Endothelial cell of umbilical vein (primary cell): ENCODE measurements at regions of chr20 and their contacts with region 1.

Region 1: DNA sequence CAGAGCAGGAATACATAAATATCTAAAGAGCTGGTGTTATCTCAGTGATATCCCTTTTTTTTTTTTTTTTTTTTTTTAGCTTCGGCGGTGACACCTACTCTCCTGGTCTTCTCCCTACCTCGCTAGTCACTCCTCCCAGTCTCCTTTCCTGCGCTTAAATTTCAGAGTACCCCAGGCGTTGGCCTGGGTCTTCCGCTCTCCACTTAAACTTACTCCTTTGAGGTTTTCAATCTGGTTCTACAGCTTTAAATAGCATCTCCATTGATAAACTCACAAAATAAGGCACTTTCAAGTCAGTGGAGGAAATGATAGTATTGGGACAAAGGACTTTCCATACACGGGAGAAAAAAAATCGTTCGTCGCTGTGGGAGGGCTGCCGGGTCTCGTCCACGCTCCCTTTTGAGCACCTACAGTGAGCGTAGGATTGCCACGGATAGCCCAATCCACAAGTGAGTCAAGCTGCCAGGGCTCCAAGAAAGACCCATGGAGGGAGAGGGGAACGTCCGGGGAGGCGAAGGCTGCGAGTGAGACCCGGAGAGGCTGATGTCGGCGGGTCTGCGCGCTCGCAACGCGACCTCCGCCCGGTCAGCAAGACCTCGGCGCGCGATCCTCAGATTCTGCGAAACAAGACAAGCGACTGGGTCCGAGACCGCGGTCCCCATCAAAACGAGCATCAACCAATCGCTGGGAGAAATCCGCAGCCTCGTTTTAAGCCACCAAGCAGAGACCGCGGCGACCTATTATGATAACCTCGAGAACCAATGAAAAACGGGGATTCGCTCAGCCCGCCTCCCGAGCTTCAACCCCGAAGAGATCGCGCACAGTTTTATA is 672 bp upstream of the SRSF6 start:
- DNase-seq: peak; percentile 92
- H3K4me3 ChIP-seq: peak overlapping the region; percentile 74 to 99 (median 90)
- H3K27ac ChIP-seq: peak overlapping the region; percentile 96
- H3K4me1 ChIP-seq: peaks cover 16% of the 10 kb centered on the region
- H3K27me3 ChIP-seq: peaks cover 5 to 6% of the 10 kb centered on the region in 2 experiments
- CTCF ChIP-seq: no peak
- POLR2A ChIP-seq: no peak

Region 2: GRCh38 chr20:42652266-42652665 is 804.8 kb before region 1 on chr20:
- CTCF ChIA-PET with region 1: no interaction called
- POLR2A ChIA-PET with region 1: no interaction called
- dilution Hi-C with region 1: no loop called
- intact Hi-C with region 1: no loop called
- DNase-seq: no peak
- H3K4me3 ChIP-seq: no peak overlapping the region
- H3K27ac ChIP-seq: no peak overlapping the region
- H3K4me1 ChIP-seq: no peaks in the 10 kb centered on the region
- H3K27me3 ChIP-seq: no peaks in the 10 kb centered on the region
- CTCF ChIP-seq: no peak
- POLR2A ChIP-seq: no peak

Region 3: DNA sequence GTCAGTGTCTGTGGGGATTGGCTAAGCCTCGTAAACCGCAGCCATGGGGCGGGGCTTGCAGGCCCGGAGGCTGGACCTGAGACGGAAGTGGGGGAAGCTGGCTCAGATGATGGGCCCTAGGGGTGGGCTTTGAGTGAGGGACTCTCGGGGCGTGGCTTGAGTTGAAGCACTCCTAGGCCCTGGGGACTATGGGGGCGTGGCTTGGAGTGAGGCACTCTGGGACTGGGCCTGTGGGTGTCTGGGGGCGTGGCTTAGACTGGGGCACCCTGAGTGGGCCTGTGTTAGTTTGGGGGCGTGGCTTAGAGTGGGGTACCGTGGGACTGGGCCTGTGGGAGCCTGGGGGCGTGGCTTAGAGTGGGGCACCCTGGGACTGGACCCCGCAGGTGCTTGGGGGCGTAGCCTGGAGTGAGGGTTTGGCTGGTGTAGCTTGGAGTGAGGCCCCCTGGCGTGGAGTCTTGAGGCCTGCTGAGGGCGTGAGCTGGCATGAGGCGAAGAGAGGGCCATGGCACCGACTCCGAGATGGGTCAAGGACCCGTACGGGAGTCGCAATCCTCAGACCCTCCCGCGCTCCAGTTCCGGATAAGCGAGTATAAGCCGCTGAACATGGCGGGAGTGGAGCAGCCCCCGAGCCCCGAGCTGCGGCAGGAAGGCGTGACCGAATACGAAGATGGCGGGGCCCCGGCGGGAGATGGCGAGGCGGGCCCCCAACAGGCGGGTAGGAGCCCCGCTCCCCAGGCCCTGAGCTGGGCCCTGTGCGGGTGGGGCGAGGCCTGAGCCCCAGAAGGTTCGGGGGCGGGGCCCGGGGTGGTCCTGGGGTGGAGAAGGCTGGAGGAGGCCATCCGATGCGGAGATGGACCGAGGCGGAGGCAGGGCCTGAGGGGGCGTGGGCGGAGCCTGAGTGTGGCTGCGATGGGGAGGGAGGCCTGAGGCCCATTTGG is 57.3 kb after region 1 on chr20:
- CTCF ChIA-PET with region 1: no interaction called
- POLR2A ChIA-PET with region 1: interaction called, 9 read pairs
- dilution Hi-C with region 1: no loop called
- intact Hi-C with region 1: loop called (anchors 1 kb)
- DNase-seq: peak; percentile 98
- H3K4me3 ChIP-seq: peak overlapping the region; percentile 45 to 71 (median 46)
- H3K27ac ChIP-seq: peak overlapping the region; percentile 12
- H3K4me1 ChIP-seq: no peaks in the 10 kb centered on the region
- H3K27me3 ChIP-seq: no peaks in the 10 kb centered on the region
- CTCF ChIP-seq: peak; percentile 15 to 55
- POLR2A ChIP-seq: no peak

Region 4: GRCh38 chr20:43590392-43591323 is 133.6 kb after region 1 on chr20 and contains the start of gene IFT52:
- CTCF ChIA-PET with region 1: no interaction called
- POLR2A ChIA-PET with region 1: interaction called, 9 read pairs
- dilution Hi-C with region 1: no loop called
- intact Hi-C with region 1: loop called (anchors 5 kb)
- DNase-seq: peak; percentile 93
- H3K4me3 ChIP-seq: peak within 1 kb of the TSS; percentile 64 to 100 (median 80)
- H3K27ac ChIP-seq: peak within 1 kb of the TSS; percentile 91
- H3K4me1 ChIP-seq: peaks cover 9% of the 10 kb centered on the region
- H3K27me3 ChIP-seq: peaks cover 0 to 2% of the 10 kb centered on the region in 2 experiments
- CTCF ChIP-seq: no peak
- POLR2A ChIP-seq: peak; percentile 32
- total RNA-seq, gene IFT52: 29.7 and 30.0 TPM in 2 replicates

Region 5: DNA sequence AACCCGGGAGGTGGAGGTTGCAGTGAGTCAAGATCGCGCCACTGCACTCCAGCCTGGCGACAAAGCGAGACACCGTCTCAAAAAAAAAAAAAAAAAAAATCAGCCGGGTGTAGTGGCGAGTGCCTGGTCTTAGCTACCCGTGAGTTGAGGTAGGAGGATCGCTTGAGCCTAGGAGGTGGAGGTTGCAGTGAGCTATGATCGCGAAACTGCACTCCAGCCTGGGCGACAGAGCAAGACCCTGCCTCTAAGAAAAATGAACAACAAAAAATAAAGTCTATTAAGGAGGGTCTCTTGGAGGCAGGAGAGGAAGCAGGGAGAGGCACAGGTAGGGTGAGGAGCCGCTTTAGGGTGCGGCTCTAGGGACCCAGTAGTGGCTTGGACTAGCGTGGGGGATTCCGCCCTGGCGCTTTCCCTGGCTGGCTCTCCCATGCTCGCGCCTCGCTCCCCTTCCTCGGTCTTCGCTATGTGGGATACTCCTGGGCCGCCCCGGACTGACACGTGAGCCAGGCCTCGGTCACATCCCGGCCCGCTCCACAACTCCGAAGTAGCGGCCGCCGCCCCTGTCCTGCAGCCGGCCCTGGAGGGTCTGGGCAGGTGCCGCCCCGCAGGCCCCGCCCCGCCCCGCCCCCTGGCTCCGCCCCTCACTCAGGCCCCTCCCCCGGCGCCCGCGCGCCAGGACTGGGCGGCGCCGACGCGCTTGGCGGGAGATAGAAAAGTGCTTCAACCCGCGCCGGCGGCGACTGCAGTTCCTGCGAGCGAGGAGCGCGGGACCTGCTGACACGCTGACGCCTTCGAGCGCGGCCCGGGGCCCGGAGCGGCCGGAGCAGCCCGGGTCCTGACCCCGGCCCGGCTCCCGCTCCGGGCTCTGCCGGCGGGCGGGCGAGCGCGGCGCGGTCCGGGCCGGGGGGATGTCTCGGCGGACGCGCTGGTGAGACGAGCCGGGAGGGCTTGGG is 209.6 kb after region 1 on chr20 and contains the start of gene MYBL2:
- CTCF ChIA-PET with region 1: no interaction called
- POLR2A ChIA-PET with region 1: no interaction called
- dilution Hi-C with region 1: no loop called
- intact Hi-C with region 1: loop called (anchors 2 kb)
- DNase-seq: peak; percentile 48
- H3K4me3 ChIP-seq: peak within 1 kb of the TSS; percentile 35 to 47 (median 43)
- H3K27ac ChIP-seq: peak within 1 kb of the TSS; percentile 14
- H3K4me1 ChIP-seq: peaks cover 15% of the 10 kb centered on the region
- H3K27me3 ChIP-seq: peaks cover 0 to 7% of the 10 kb centered on the region in 2 experiments
- CTCF ChIP-seq: no peak
- POLR2A ChIP-seq: no peak
- total RNA-seq, gene MYBL2: 105 and 107 TPM in 2 replicates

Region 6: DNA sequence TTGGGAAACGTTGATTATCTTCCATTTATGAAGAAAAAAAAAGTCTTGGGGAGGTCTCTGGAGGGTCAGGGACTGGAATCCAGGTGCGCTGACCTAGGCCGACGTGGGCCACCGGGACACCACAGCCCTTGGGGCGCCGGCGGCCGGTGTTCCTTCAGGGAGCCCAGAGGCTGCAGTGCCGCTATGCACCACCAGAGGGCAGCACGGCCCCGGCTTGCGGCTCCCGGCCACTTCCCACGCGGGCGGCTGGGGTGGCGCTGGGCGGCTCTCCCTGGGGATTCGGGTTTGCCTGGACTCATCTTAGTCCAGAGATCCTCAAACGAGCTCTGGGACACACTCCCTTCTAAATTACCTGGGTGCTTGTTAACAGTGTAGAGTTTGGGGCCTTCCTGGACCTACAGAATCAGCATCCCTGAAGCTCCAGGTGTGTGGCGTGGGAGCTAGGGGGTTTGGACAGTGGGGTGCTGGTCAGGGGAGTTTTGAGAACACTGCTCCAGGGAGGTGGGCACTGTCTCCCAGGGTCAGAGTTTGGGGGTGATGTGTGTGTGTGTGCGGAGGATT is 292.8 kb after region 1 on chr20:
- CTCF ChIA-PET with region 1: no interaction called
- POLR2A ChIA-PET with region 1: no interaction called
- dilution Hi-C with region 1: no loop called
- intact Hi-C with region 1: loop called (anchors 5 kb)
- DNase-seq: peak; percentile 37
- H3K4me3 ChIP-seq: no peak overlapping the region
- H3K27ac ChIP-seq: no peak overlapping the region
- H3K4me1 ChIP-seq: peaks cover 12% of the 10 kb centered on the region
- H3K27me3 ChIP-seq: no peaks in the 10 kb centered on the region
- CTCF ChIP-seq: peak; percentile 99
- POLR2A ChIP-seq: no peak